Natural killer cell (primary cell): ENCODE measurements at regions of chr17 and their contacts with region 1.

Region 1: DNA sequence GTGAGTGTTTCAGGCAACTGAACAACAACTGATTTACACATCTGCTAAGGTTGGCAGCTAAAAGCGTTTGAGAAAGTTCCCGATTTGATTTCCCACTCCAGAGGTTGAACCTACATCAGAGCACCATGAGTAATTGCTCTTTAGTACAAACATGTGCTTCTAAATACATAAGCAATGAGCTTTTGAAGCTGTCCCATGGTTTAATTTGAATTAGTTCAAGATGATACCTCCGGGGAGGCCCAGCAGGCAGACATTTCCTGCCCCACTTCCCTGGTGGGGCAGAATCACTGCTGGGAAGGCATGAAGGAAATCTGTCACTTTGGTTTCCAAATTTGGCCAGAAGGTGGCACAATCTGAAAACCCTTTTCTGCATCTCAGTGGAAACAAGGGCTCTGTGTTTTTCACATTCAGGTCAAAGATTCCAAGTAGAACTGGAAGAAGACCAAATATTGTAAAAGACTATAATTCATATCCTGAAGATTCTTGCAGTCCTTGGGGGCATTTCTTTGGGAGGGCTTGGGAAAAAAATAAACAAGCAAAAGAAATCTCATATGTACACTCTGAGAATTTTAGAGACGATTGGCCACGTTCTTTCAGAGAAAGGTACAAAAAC is 176.2 kb upstream of the FAM20A start:
- DNase-seq: peak in 1 of 2 donors; percentile 57
- ATAC-seq: no peak
- H3K4me3 ChIP-seq: no peak overlapping the region
- H3K4me3 Mint-ChIP-seq: no peak overlapping the region
- H3K27ac ChIP-seq: no peak overlapping the region
- H3K27ac Mint-ChIP-seq: no peak overlapping the region
- H3K4me1 ChIP-seq: no peaks in the 10 kb centered on the region
- H3K4me1 Mint-ChIP-seq: no peaks in the 10 kb centered on the region
- H3K27me3 ChIP-seq: no peaks in the 10 kb centered on the region
- H3K27me3 Mint-ChIP-seq: peaks cover 11 to 26% of the 10 kb centered on the region in 2 donors
- CTCF ChIP-seq: peak; percentile 61

Region 2: DNA sequence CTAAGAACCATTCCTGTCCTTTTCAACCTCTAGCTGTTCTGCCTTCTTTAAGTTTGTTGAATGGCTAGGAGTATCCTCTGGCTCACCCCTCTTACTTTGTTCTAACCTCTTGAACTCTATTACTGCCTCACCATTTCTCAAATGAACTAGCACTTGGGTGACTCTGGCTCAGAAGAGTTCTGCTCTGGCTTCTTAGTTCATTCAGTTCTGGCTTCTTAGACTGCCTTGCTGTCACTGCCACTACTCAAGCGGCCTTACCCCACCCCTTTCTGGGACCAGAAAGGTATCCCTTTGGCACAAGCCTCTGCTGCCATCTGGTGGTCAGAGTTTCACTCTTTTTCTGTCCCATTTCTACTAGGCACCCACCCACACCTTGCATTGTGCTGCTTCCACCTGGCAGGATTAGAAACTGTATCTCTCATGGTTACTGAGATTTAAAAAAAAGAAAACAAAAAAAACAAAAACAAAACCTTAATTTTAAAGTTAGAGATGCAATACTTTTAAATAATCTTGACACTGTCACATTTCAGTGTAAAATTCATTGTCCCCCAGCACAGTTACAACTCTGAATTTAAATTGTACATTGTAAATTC is 458.1 kb after region 1 on chr17:
- intact Hi-C with region 1: loop called (anchors 1 kb)
- DNase-seq: peak; percentile 53 to 73
- ATAC-seq: peak; percentile 72 to 86 (median 80)
- H3K4me3 ChIP-seq: no peak overlapping the region
- H3K4me3 Mint-ChIP-seq: no peak overlapping the region
- H3K27ac ChIP-seq: no peak overlapping the region
- H3K27ac Mint-ChIP-seq: no peak overlapping the region
- H3K4me1 ChIP-seq: no peaks in the 10 kb centered on the region
- H3K4me1 Mint-ChIP-seq: peaks cover 0 to 4% of the 10 kb centered on the region in 2 donors
- H3K27me3 ChIP-seq: no peaks in the 10 kb centered on the region
- H3K27me3 Mint-ChIP-seq: no peaks in the 10 kb centered on the region
- CTCF ChIP-seq: peak; percentile 81

Region 3: DNA sequence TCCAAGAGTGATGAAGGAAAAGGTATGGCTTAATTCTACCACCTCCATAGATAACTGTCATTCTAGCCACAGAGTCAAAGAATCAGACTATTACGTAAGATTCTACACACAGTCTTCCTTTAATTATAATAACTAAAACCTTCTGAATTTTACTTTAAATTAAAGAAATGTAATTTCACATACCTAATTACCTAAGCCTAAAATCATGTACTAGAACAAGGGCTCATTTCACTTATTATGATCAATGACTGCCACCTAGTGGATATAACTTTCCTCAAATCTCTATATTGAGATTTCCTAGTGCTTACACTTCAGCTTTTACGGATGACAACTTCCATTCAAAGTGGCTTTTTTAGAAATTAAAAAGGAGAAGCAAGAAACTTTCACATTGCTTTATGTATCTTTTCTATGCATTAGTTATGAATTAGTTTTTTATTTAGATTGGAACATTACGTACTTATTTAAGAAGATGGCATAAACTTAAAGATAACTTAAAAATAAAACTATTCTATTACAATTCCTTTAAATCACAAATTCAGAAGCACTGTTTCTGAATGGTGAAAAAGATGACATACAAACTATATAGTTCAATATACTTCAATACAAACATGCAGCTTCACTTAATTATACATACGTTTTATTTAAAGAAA is 469.5 kb after region 1 on chr17:
- intact Hi-C with region 1: loop called (anchors 1 kb)
- DNase-seq: peak in 1 of 2 donors; percentile 59
- ATAC-seq: peak; percentile 47 to 52 (median 51)
- H3K4me3 ChIP-seq: no peak overlapping the region
- H3K4me3 Mint-ChIP-seq: no peak overlapping the region
- H3K27ac ChIP-seq: no peak overlapping the region
- H3K27ac Mint-ChIP-seq: no peak overlapping the region
- H3K4me1 ChIP-seq: no peaks in the 10 kb centered on the region
- H3K4me1 Mint-ChIP-seq: no peaks in the 10 kb centered on the region
- H3K27me3 ChIP-seq: no peaks in the 10 kb centered on the region
- H3K27me3 Mint-ChIP-seq: no peaks in the 10 kb centered on the region
- CTCF ChIP-seq: peak; percentile 87